Activated CD8-positive, alpha-beta T cell treated with anti-CD3 and anti-CD28 coated beads for 36 hours (primary cell): ENCODE measurements at regions of chr10 and their contacts with region 1.

Region 1: DNA sequence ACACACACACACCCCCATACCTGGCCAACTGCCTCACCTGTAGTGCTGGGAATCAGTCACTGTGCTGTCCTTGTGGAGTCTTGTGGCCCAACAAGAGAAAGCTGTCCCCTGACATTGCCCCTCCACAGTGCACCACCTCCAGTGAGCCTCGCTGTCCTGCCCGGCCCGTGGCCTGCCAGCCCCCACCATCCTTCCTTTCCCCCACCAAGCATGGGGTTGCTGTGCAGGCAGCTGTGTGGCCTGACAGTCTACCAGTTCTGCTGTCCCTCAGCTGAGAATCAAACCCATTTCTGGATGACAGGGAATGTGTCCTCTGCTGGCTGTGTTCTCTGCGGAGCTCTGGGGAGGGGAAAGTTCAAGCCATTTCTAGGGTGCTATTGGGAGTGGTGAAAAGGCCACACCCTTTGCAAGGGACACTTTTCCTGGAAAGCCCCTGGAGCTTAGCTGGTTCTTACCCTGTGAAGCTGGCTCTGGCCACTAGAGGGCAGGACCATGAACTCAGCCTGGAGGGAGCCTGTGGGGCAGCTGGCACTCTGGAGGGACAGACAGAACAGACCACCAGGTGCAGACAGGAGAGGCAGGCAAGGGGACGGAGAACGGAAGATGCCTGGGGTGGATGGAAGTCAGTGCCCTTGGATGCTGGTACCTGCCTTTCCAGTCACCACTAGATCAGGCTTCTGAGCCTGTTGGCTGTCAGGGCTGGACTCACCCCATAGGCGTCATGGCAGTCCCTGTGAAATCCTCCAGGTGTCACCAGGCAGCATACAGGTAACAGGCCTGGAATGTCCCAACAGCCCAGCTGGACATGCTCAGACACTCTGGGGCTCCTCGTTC is 10.5 kb upstream of the MTPAP start:
- DNase-seq: peak; percentile 81
- ATAC-seq: peak; percentile 95
- H3K4me3 Mint-ChIP-seq: no peak overlapping the region
- H3K27ac Mint-ChIP-seq: no peak overlapping the region
- H3K4me1 Mint-ChIP-seq: no peaks in the 10 kb centered on the region
- H3K27me3 Mint-ChIP-seq: peaks cover 1% of the 10 kb centered on the region
- CTCF ChIP-seq: peak; percentile 80

Region 2: DNA sequence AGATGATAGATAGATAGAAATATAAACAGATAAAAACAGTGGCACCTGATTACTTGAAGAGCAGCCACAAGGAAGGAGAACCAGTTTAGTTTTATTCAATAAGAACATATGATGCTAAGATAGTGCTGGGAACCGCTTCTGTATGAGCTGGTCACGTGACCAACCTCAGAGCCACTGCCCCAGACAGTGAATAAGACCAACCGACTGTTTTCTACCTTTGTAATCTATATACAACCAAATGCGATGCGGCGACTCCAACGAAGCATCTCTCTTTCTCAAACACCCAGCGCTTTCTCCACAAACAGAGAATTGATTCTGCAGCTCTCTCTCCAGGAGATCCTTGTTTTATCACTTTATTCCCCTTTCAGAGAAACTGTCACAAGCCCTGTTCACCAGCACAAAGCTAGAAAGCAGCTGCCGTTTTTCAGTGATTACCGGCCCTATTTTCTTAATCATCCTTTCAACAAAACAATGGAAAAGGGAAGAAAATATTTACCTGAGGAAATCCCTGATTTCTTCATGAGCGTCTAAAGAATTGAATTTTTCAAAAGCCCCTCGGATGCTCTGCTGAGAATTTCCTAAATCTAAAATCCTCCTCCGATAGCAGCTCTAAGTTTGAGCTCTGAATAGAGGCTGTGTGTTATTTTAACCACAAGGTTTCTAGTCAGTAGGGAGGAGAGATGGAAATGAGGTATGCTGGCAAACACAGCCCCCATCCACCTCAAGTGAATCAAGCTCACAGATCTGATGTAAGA is 244.5 kb before region 1 on chr10:
- CTCF ChIA-PET with region 1: no interaction called
- POLR2A ChIA-PET with region 1: no interaction called
- intact Hi-C with region 1: no loop called
- DNase-seq: no peak
- ATAC-seq: no peak
- H3K4me3 Mint-ChIP-seq: no peak overlapping the region
- H3K27ac Mint-ChIP-seq: no peak overlapping the region
- H3K4me1 Mint-ChIP-seq: no peaks in the 10 kb centered on the region
- H3K27me3 Mint-ChIP-seq: peaks cover 17% of the 10 kb centered on the region
- CTCF ChIP-seq: no peak

Region 3: GRCh38 chr10:30348378-30348776 is 11.2 kb before region 1 on chr10:
- CTCF ChIA-PET with region 1: interaction called, 41 read pairs
- POLR2A ChIA-PET with region 1: no interaction called
- intact Hi-C with region 1: no loop called
- DNase-seq: no peak
- ATAC-seq: peak; percentile 17
- H3K4me3 Mint-ChIP-seq: peak overlapping the region; percentile 84
- H3K27ac Mint-ChIP-seq: peak overlapping the region; percentile 89
- H3K4me1 Mint-ChIP-seq: peaks cover 31% of the 10 kb centered on the region
- H3K27me3 Mint-ChIP-seq: no peaks in the 10 kb centered on the region
- CTCF ChIP-seq: no peak

Region 4: DNA sequence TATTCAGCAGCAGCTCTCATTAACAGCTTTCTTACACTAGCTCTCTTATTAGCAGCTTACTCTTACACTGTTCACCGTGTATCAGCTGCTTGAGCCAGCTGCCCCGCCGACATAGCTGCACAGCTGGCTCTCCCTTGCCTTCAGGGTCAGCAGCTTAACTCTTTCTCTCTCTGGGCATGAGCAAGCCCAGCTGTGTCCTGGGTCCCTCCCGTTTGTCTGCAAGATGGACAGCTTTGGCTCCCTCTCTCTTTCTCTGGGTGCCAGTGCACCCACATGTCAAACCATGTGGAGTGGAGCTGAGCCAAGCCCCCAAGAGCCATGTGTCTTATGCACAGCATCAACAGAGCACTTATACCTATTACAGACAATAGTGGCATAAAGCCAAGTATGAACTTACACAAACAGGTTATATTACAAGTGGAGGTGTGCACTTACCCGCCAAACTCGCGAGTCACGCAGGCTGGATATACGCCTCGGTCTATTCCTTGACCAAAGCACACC is 25.2 kb after region 1 on chr10:
- CTCF ChIA-PET with region 1: interaction called, 38 read pairs
- POLR2A ChIA-PET with region 1: no interaction called
- intact Hi-C with region 1: no loop called
- DNase-seq: peak; percentile 50
- ATAC-seq: peak; percentile 83
- H3K4me3 Mint-ChIP-seq: no peak overlapping the region
- H3K27ac Mint-ChIP-seq: no peak overlapping the region
- H3K4me1 Mint-ChIP-seq: no peaks in the 10 kb centered on the region
- H3K27me3 Mint-ChIP-seq: peaks cover 3% of the 10 kb centered on the region
- CTCF ChIP-seq: no peak